Mucosa of descending colon (tissue), 3 donors: ENCODE measurements at regions of chr5 and their contacts with region 1.

Region 1: DNA sequence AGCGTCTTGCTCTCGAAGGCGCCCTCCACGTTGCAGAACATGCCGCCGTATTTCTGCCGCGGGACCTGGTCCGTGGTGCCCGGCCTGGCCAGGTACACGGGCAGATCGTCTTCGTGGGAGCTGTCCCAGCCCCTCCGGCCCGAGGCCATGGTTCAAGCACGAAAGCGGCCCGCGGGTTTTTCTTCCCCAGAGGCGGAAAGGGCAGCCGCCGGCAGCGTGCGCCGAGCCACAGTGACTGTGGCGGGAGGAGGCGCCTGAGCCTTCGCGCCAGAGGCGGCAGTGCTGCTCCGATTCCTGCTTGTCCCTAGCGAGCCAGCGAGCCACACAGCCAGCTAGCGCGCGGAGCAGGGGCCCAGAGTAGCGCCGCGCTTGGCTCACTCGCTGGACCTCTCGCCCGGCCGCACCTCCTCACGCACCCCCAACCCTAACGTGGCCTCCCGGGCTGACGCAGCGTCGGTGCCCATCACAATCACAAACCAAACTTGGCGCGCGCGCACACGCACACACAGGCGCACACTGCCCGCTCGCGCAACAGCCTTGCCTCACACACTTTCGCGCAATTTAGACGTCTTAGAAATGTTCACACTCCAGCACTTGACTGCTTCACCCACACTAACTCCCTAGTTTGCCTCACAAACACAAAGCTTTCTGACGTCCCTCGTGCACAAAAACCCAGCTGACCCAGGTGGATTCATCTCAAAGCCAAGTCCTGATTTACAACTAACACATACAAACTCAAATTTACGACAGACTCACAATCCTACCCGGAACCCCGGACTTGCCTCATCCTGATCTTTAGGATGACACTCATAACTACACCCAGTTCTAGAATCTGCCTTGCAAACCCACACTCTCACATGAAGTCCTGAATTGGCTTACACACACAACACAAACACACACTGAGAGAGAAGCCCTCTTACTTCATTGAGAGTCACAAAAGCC is at the start of gene DPYSL3:
- DNase-seq: peak; percentile 47 to 69 (median 66)
- ATAC-seq: peak; percentile 84
- H3K4me3 ChIP-seq: peak within 1 kb of the TSS; percentile 11
- H3K4me1 ChIP-seq: peaks cover 6% of the 10 kb centered on the region
- CTCF ChIP-seq: no peak
- total RNA-seq, gene DPYSL3: 12.0 to 134 (median 31.1) TPM

Region 2: DNA sequence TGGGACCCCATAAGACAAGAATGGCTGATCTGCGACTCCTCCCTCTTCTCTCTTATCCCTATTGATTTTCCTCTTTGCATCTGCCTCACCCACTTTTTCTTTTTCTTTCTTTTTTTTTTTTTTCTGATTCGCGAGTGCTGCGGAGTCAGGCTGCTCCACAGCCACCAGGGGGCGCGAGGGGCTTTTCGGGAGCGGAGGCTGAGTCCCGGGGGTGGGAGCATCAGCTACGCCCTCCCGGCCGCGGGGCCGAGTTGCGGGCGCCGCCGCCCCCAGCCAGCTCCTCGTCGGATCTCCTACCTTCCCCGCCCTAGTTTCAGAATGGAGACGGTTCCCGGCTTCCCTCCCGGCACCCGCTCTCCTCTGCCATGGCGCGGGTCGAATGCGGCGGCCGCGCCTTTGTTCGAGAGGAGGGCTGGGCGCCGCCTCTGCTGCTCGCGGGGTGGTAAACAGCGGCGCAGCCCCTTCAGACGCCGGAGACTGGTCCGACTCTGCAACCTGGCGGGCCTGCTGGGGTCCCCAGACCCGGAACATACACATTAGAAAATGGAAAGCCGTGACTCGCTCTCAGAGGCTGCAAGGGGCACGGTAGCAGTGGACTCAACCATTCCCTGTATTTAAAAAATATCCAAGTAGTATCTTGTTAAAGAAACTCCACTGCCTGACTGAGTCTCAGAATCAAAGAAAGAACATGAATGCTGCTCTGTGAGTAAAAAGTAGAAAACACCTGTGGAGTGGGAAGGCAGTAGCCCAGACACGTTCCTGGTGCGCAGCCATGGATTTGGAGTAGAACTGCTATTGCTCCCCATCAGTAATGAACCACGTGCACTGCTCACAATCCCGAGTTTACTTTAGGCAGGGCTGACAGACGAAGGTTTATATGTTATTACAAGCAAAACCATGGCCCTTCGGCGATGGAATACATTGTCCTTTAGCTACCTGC is 55.8 kb before region 1 on chr5:
- intact Hi-C with region 1: loop called in 1 of 2 experiments (anchors 10 kb)
- DNase-seq: peak; percentile 83 to 87 (median 84)
- ATAC-seq: peak; percentile 85
- H3K4me3 ChIP-seq: no peak overlapping the region
- H3K4me1 ChIP-seq: peaks cover 14% of the 10 kb centered on the region
- CTCF ChIP-seq: peak; percentile 76

Region 3: DNA sequence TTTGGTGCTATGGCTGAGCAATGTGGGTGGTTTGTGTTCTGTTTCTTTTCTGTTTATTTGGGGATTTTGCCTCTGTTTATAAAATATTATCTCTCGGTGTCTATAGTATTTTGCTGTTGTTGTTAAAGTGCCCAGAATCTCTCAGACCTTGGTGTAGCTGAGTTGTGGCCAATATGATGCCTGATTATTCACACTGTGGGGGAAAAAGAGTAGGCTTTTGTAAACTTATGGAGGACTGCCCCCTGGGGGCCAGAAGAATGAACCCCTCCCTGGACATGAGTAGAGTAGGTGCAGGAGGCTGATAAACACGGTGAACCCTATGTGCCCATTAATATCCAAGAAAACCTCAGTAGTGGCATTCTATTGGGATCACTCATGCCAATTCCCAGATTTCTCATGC is 48.8 kb after region 1 on chr5:
- intact Hi-C with region 1: loop called in 1 of 2 experiments (anchors 10 kb)
- DNase-seq: peak in 1 of 3 donors; percentile 44
- ATAC-seq: peak; percentile 51
- H3K4me3 ChIP-seq: no peak overlapping the region
- H3K4me1 ChIP-seq: no peaks in the 10 kb centered on the region
- CTCF ChIP-seq: no peak